ENCODE measurements at regions of chr11 and their contacts with region 1.

Region 1: DNA sequence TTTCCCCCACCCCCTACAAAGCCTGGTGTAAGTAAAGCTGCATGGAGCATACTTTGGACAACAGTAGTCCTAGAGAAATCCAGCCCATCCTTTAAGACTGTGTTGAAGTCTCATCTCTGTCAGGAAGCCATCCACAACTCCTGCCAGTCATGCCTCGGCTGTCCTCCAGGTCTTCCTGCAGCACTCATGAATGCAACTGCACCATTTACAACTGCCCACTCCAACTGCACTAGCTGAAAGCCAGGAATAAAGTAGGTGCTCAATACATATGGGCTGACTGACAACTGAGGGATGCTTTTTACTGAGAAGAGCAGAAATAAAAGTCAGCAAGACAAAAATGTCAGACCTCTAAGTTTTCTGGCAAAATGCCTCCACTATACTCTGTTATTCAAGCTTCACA is 27.4 kb downstream of the IL18BP start:
- DNase-seq: no peak
- ATAC-seq: peak; percentile 20

Region 2: GRCh38 chr11:72098741-72099140 is 72.7 kb after region 1 on chr11:
- intact Hi-C with region 1: loop called (anchors 5 kb)
- DNase-seq: no peak
- ATAC-seq: no peak